MCF 10A (cell line): ENCODE measurements at regions of chr5 and their contacts with region 1.

Region 1: DNA sequence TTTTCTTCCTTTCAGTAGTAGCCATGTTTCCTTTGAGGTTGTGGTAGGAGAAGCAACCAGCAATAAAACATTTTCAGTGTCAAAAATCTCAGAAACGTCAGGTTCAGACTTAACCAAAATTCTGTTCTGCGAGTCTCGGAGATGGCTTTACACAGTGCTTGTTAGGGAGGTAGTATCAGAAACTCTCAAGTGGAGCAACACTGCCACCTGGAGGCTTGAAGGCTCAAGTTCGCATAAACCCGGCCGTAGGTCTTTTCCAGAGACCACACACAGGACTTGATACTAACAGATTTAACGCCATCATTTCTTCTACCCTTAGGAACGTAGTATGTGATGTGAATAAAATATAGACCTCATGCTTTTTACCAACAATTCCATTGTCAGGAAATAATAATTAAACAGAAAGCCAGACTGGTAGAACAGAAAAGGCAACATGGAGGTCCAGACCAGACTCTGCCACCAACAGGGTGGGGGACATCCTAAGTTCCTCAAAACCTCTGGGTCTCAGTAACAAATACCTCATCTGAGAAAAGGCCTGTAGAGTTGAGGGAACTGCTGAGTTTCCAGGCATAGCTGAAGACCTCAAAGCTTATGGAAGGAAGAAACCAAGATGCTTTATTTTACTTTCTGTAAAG is 8.5 kb downstream of the PTGER4 start:
- DNase-seq: peak; percentile 90
- H3K4me3 Mint-ChIP-seq: no peak overlapping the region
- H3K27ac Mint-ChIP-seq: no peak overlapping the region
- H3K4me1 Mint-ChIP-seq: peaks cover 43% of the 10 kb centered on the region
- H3K27me3 Mint-ChIP-seq: no peaks in the 10 kb centered on the region
- CTCF ChIP-seq: peak; percentile 77

Region 2: DNA sequence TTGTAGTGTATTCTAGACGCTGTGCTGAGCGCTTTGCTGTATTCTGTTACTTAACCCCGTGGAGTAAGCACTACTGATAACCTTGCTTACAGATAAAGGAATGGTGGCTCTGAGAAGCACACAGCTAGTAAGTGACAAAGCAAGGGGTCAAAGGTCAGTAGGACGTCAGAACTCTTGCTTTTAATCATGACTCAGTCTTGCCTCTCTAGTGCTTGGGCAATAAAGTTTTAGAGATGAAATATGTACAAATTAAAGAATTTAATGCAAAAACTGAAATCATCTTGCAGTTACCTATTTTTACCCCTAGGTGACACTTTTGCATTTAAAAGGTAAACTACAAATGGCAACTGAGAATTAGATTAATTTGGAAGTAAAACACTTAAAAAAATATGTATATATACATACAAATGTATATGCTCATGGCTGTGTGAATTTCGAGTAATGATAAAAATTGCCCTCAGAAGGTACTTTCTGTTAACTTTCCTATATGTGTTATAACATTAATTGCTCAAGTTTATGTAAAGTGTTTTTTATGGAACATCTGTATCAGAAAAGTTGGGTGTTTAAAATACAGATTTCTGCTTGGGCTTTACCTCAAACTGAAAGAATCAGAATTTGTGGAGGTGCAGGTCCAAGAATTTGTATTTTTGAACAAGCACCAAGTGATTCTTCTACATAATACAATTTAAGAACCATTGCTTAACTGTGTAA is 1088.4 kb before region 1 on chr5:
- CTCF ChIA-PET with region 1: interaction called, 4 read pairs
- POLR2A ChIA-PET with region 1: no interaction called
- intact Hi-C with region 1: loop called (anchors 5 kb)
- DNase-seq: peak; percentile 67
- H3K4me3 Mint-ChIP-seq: no peak overlapping the region
- H3K27ac Mint-ChIP-seq: no peak overlapping the region
- H3K4me1 Mint-ChIP-seq: no peaks in the 10 kb centered on the region
- H3K27me3 Mint-ChIP-seq: peaks cover 29% of the 10 kb centered on the region
- CTCF ChIP-seq: peak; percentile 40

Region 3: GRCh38 chr5:39948867-39949468 is 739.3 kb before region 1 on chr5:
- CTCF ChIA-PET with region 1: interaction called, 37 read pairs
- POLR2A ChIA-PET with region 1: interaction called, 3 read pairs
- intact Hi-C with region 1: loop called (anchors 1 kb)
- DNase-seq: peak; percentile 79
- H3K4me3 Mint-ChIP-seq: no peak overlapping the region
- H3K27ac Mint-ChIP-seq: no peak overlapping the region
- H3K4me1 Mint-ChIP-seq: peaks cover 5% of the 10 kb centered on the region
- H3K27me3 Mint-ChIP-seq: no peaks in the 10 kb centered on the region
- CTCF ChIP-seq: peak; percentile 62

Region 4: GRCh38 chr5:40165794-40166728 is 522.2 kb before region 1 on chr5:
- CTCF ChIA-PET with region 1: interaction called, 4 read pairs
- POLR2A ChIA-PET with region 1: no interaction called
- intact Hi-C with region 1: loop called (anchors 2 kb)
- DNase-seq: peak; percentile 14
- H3K4me3 Mint-ChIP-seq: no peak overlapping the region
- H3K27ac Mint-ChIP-seq: no peak overlapping the region
- H3K4me1 Mint-ChIP-seq: peaks cover 10% of the 10 kb centered on the region
- H3K27me3 Mint-ChIP-seq: no peaks in the 10 kb centered on the region
- CTCF ChIP-seq: peak; percentile 16

Region 5: GRCh38 chr5:40367255-40367654 is 321.0 kb before region 1 on chr5:
- CTCF ChIA-PET with region 1: interaction called, 3 read pairs
- POLR2A ChIA-PET with region 1: no interaction called
- intact Hi-C with region 1: loop called (anchors 1 kb)
- DNase-seq: no peak
- H3K4me3 Mint-ChIP-seq: no peak overlapping the region
- H3K27ac Mint-ChIP-seq: no peak overlapping the region
- H3K4me1 Mint-ChIP-seq: no peaks in the 10 kb centered on the region
- H3K27me3 Mint-ChIP-seq: no peaks in the 10 kb centered on the region
- CTCF ChIP-seq: peak; percentile 9

Region 6: DNA sequence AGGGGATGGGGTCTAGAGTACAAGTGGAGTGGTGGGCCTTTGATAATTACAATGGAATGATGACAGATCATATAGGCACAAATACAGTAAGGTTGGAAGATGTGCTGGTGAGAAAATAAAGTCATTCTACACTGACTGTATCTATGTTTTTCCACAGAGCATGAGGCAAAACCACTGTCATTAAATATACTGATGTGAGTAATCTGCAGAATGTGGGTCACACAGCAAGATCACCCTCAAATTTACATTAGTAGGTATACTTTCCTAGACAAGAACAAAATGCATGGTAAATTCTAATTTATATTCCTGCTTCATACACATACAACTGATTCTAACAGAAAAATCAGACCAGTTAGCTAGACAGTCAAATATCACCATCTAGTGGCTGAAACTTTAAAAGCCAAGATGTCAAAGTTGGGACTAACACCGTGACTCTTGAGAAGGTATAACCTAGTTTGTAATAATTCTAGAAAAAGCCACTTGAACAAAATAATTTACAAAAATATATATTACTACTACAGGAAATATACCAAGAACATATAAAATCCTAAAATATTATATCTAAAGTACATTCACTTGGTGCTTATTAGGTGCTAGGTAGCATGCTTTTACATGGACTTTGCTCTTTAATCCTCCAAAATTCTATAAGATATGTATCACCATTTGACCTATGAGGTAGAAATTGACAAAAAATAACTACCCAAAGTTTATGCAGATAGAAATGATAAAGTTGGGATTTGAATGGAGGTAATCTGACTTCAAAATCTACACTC is 48.0 kb after region 1 on chr5:
- CTCF ChIA-PET with region 1: interaction called, 9 read pairs
- POLR2A ChIA-PET with region 1: interaction called, 5 read pairs
- intact Hi-C with region 1: loop called (anchors 1 kb)
- DNase-seq: peak; percentile 66
- H3K4me3 Mint-ChIP-seq: no peak overlapping the region
- H3K27ac Mint-ChIP-seq: no peak overlapping the region
- H3K4me1 Mint-ChIP-seq: peaks cover 12% of the 10 kb centered on the region
- H3K27me3 Mint-ChIP-seq: no peaks in the 10 kb centered on the region
- CTCF ChIP-seq: peak; percentile 71

Region 7: DNA sequence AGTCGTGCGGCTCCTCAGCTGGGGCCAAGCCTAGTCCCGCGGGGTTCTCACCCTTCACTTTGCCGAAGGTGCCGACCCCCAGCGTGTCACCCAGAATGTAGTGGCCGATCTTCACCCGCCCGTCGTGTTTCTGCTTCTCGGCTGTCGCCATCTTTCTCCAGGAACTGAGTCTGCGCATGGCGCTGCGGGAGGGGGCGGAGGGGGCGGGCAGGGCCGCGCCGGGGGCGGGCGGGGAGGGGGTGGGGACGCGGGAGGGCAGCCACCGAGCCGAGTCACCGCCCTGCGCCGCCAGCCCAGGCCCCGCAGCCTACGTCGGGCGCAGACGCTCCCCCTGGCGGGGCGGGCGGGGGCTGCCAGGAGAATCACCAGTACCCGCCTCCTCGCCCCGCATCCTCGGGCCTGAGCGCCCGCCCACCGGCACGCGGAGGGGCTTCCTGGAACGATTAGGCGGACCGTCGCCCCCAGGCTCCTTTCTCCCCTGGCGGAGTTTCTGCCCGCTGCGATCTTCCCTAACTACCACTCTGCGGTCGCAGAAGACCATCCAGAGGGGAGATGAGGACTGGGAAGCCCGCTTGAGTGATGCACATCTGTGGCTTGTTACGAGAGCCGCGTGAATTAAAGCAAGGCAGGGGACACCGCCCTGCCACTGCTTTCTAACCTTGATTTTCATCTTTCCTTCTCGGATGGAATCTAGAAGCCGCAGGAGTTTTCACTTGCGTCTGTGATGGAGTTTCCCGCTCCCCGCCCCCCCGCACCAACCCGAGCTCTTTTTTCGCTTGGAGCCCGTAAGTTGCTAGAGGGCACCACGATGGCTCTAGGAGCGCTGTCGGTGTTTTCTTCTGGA is 110.0 kb after region 1 on chr5 and contains the start of gene PRKAA1:
- CTCF ChIA-PET with region 1: no interaction called
- POLR2A ChIA-PET with region 1: no interaction called
- intact Hi-C with region 1: no loop called
- DNase-seq: peak; percentile 85
- H3K4me3 Mint-ChIP-seq: peak within 1 kb of the TSS; percentile 79
- H3K27ac Mint-ChIP-seq: peak within 1 kb of the TSS; percentile 25
- H3K4me1 Mint-ChIP-seq: peaks cover 5% of the 10 kb centered on the region
- H3K27me3 Mint-ChIP-seq: no peaks in the 10 kb centered on the region
- CTCF ChIP-seq: peak; percentile 61
- total RNA-seq, gene PRKAA1: 58.1 and 62.7 TPM in 2 replicates